Cardiac septum (tissue), 1 donor: ENCODE measurements at regions of chr6 and their contacts with region 1.

Region 1: DNA sequence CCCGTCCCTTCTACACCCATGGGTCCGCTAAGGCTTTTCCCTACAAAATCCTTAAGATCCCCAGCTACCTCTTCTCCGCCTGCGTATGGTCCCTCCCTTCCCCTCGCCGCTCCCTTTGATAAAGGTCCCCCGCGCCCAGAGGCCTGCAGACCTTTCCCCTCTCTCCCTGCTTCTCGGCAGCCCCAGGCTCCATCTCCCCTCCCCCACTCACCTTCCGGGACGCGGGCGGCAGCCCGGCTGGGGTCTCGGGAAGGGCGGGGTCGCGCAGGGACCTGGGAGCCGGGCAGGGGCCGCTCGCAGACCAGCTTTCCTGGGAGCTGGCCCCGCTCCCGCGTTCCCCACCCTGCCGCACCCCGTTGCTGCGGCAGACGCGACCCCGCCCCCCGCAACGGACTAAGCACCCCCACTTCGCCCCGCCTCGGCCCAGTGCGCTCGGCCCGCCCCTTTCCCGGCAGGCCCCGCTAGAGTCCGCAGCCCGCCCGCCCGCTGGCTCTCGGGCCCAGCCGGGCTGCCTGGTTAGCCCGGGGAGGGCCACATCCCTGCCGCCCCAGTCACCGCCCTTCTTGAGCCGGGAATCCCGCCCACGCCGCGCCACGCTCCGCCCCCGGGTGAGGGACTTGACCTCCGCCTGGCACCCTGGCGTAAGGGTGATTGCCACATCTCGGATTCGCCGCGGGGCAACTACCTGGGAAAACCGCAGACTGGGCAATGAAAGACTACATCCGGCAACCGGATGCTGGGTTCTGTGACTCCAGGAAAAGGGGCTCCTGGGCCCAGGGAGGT is at the start of gene FLOT1:
- DNase-seq: peak; percentile 99
- total RNA-seq, gene FLOT1: 251 TPM

Region 2: DNA sequence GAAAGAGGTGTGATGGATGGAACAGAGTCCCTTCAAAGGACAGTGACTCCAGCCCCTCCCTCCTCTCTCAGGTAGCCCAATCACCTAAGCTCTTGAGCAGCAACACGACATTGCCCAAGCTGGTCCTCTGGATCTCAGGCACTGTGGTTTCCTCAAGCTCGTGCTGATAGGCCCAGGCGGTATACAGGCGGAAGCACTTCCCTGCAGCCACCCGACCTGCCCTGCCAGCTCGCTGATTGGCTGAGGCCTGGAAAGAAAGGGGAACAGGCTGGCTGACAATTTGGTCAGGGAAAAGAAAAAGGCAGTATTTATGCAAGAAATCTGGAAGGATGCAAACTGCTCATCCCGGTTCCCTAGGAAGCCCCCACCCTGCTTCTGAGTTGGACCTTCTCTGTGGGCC is 86.0 kb before region 1 on chr6:
- intact Hi-C with region 1: no loop called
- DNase-seq: no peak

Region 3: GRCh38 chr6:30676660-30677285 is 65.7 kb before region 1 on chr6:
- intact Hi-C with region 1: no loop called
- DNase-seq: no peak

Region 4: GRCh38 chr6:30686908-30687658 is 55.4 kb before region 1 on chr6:
- intact Hi-C with region 1: loop called (anchors 2 kb)
- DNase-seq: peak; percentile 99

Region 5: GRCh38 chr6:30707281-30707872 is 35.1 kb before region 1 on chr6:
- intact Hi-C with region 1: no loop called
- DNase-seq: no peak

Region 6: GRCh38 chr6:30781743-30782424 is 39.4 kb after region 1 on chr6:
- intact Hi-C with region 1: loop called (anchors 2 kb)
- DNase-seq: peak; percentile 96

Region 7: GRCh38 chr6:30821862-30822782 is 79.6 kb after region 1 on chr6:
- intact Hi-C with region 1: loop called (anchors 5 kb)
- DNase-seq: no peak

Region 8: DNA sequence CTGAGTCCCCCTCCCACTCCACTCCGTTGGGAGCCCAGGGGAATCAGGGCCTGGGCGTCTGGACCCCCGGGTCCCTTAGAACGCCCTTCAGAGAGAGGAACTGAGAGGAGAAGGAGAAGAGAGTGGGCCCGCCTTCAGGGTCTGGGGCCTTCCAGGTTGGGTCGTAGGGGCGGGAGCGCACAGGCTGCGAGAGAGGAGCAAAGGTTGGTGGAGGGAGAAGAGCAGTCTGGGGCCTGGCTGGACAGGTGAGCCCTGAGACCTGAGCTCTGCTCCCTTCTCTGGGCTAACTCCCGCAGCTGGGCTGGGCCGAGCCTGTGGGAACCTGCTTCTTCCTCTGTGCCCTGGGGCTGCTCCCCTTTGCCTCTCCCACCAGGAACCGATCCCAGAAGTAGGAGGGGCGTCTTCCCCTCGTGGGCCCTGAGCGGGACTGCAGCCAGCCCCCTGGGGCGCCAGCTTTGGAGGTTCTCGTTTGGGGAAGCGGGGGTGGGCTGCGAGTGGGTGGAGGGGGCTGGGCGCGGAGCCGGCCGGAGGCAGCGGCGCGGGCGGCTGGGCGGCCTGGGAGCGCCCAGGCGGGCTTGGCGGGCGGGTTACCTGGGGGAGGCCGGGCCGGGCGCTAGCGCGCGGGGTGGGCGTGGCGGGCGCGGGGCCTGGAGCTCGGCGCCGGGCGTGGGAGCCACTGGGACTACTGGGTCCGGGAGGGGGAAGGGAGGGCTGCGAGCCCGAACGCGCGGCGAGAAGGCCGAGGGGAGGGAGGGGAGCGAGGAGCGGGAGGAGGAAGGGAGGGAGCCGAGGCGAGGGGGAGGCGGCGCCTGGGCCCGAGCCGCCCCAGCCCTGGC is 141.4 kb after region 1 on chr6 and contains the start of gene DDR1:
- intact Hi-C with region 1: loop called (anchors 2 kb)
- DNase-seq: peak; percentile 88
- total RNA-seq, gene DDR1: 61.4 TPM

Region 9: GRCh38 chr6:32267035-32267434 is 1524.5 kb after region 1 on chr6:
- intact Hi-C with region 1: no loop called
- DNase-seq: no peak